ENCODE measurements at regions of chr7 and their contacts with region 1.

Region 1: GRCh38 chr7:136883046-136883445 is 14.6 kb downstream of the CHRM2 start:
- DNase-seq: no peak
- ATAC-seq: peak in 2 of 8 donors; percentile 18 to 33
- H3K4me3 ChIP-seq: no peak overlapping the region
- H3K27ac ChIP-seq: peak overlapping the region in 6 of 10 donors; percentile 32 to 83 (median 64)
- H3K4me1 ChIP-seq: peaks cover 0 to 41% (median 3%) of the 10 kb centered on the region in 9 donors
- H3K27me3 ChIP-seq: no peaks in the 10 kb centered on the region
- CTCF ChIP-seq: no peak

Region 2: DNA sequence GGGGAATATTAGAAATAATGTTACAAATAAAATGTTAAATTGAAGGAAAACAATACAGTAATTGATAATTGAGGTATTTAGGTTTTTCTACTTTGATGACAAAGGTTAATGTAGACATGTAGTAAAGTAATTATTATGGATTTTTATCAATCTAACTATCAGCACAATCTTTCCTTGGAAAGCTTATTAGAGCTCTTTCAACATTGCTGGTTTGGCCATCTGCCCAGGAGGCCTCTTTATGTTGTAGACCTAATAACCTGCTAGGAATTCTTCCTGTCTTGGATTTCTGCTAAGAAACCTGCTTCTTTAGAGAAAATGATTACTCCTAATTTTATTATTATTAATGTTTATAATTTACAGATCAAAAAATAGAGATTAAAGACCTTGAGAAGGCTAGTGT is 64.3 kb after region 1 on chr7:
- intact Hi-C with region 1: loop called in 1 of 10 experiments (anchors 10 kb)
- DNase-seq: no peak
- ATAC-seq: no peak
- H3K4me3 ChIP-seq: no peak overlapping the region
- H3K27ac ChIP-seq: no peak overlapping the region
- H3K4me1 ChIP-seq: peaks cover 0 to 11% (median under 1%) of the 10 kb centered on the region in 9 donors
- H3K27me3 ChIP-seq: no peaks in the 10 kb centered on the region
- CTCF ChIP-seq: no peak

Region 3: DNA sequence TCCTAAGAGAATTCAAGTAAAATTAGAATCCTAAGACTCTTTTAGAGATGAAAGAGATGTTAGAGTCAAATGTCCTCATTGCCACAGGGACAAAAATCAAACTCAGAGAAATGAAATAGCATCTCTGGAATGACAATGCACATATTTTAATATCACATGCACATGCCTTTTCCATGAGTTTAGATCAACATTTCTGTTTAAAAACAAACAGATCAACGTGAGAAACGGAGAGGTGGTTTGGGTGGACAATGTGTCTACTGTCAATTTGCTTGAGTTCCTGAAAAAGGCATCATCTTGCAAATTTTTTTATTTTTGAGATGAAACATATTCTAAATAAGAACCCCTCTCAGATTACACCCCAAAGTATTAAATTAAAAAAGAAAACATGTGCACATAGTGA is 115.4 kb after region 1 on chr7:
- intact Hi-C with region 1: loop called in 1 of 10 experiments (anchors 5 kb)
- DNase-seq: no peak
- ATAC-seq: no peak
- H3K4me3 ChIP-seq: no peak overlapping the region
- H3K27ac ChIP-seq: peak overlapping the region in 7 of 10 donors; percentile 21 to 72 (median 57)
- H3K4me1 ChIP-seq: peaks cover 0 to 35% (median 4%) of the 10 kb centered on the region in 9 donors
- H3K27me3 ChIP-seq: no peaks in the 10 kb centered on the region
- CTCF ChIP-seq: no peak

Region 4: GRCh38 chr7:137146012-137146455 is 263.0 kb after region 1 on chr7:
- intact Hi-C with region 1: loop called in 1 of 10 experiments (anchors 10 kb)
- DNase-seq: no peak
- ATAC-seq: no peak
- H3K4me3 ChIP-seq: no peak overlapping the region
- H3K27ac ChIP-seq: no peak overlapping the region
- H3K4me1 ChIP-seq: peaks cover 0 to 13% (median 0%) of the 10 kb centered on the region in 9 donors
- H3K27me3 ChIP-seq: no peaks in the 10 kb centered on the region
- CTCF ChIP-seq: no peak

Measured in heart right ventricle (tissue), 16 donors.